ENCODE measurements at regions of chr15 and their contacts with region 1.

Region 1: GRCh38 chr15:77543159-77543882 is 89.4 kb downstream of the LINGO1 start:
- DNase-seq: peak; percentile 87 to 95 (median 94)
- H3K4me3 ChIP-seq: peak overlapping the region; percentile 38
- H3K27ac ChIP-seq: peak overlapping the region; percentile 33 to 64
- H3K4me1 ChIP-seq: peaks cover 5% of the 10 kb centered on the region
- H3K27me3 ChIP-seq: no peaks in the 10 kb centered on the region
- CTCF ChIP-seq: peak; percentile 97 to 98 (median 97)
- EP300 ChIP-seq: no peak
- POLR2A ChIP-seq: peak; percentile 13

Region 2: DNA sequence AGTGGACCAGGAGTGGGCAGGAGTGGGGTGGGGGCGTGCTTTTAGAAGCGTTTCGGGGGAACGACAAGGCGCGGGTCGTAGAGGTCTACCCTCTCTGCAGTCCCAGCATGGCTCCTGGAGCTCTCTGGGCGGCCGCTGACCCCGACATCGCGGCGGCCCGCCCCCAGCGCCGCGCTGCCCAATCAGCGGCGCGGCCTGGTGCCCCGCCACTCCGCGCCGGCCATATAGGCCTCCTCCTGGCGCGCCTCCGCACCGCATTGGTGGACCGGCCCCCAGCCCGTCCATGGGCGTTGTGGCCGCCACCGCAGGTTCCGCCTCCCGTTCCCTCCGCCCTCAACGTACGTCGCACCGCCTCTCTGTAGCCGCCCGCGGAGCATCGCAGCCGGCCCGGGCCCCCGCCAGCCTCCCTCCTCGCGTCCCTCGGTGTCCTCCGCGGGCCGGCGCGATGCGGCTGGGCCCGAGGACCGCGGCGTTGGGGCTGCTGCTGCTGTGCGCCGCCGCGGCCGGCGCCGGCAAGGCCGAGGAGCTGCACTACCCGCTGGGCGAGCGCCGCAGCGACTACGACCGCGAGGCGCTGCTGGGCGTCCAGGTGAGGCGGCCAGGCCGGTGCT is 611.8 kb before region 1 on chr15 and contains the start of gene RCN2:
- intact Hi-C with region 1: loop called in 1 of 4 experiments (anchors 10 kb)
- DNase-seq: peak; percentile 93 to 97 (median 94)
- H3K4me3 ChIP-seq: peak within 1 kb of the TSS; percentile 74
- H3K27ac ChIP-seq: peak within 1 kb of the TSS; percentile 60 to 90
- H3K4me1 ChIP-seq: no peaks in the 10 kb centered on the region
- H3K27me3 ChIP-seq: no peaks in the 10 kb centered on the region
- CTCF ChIP-seq: peak in 1 of 3 donors; percentile 31
- EP300 ChIP-seq: no peak
- POLR2A ChIP-seq: peak; percentile 69
- total RNA-seq, gene RCN2: 31.7 to 58.2 (median 38.3) TPM

Region 3: GRCh38 chr15:77024271-77025082 is 518.8 kb before region 1 on chr15:
- intact Hi-C with region 1: loop called in 2 of 4 experiments (anchors 5 to 10 kb)
- DNase-seq: peak; percentile 61 to 83 (median 77)
- H3K4me3 ChIP-seq: no peak overlapping the region
- H3K27ac ChIP-seq: no peak overlapping the region
- H3K4me1 ChIP-seq: peaks cover 4% of the 10 kb centered on the region
- H3K27me3 ChIP-seq: no peaks in the 10 kb centered on the region
- CTCF ChIP-seq: peak; percentile 79 to 94 (median 84)
- EP300 ChIP-seq: no peak
- POLR2A ChIP-seq: no peak

Region 4: GRCh38 chr15:77107531-77108355 is 435.6 kb before region 1 on chr15:
- intact Hi-C with region 1: loop called in 2 of 4 experiments (anchors 5 kb)
- DNase-seq: peak; percentile 52 to 69 (median 62)
- H3K4me3 ChIP-seq: no peak overlapping the region
- H3K27ac ChIP-seq: no peak overlapping the region
- H3K4me1 ChIP-seq: peaks cover 6% of the 10 kb centered on the region
- H3K27me3 ChIP-seq: no peaks in the 10 kb centered on the region
- CTCF ChIP-seq: peak; percentile 34 to 74 (median 36)
- EP300 ChIP-seq: no peak
- POLR2A ChIP-seq: no peak

Region 5: GRCh38 chr15:77112838-77113504 is 430.4 kb before region 1 on chr15:
- intact Hi-C with region 1: loop called in 3 of 4 experiments (anchors 2 to 5 kb)
- DNase-seq: no peak
- H3K4me3 ChIP-seq: no peak overlapping the region
- H3K27ac ChIP-seq: no peak overlapping the region
- H3K4me1 ChIP-seq: no peaks in the 10 kb centered on the region
- H3K27me3 ChIP-seq: no peaks in the 10 kb centered on the region
- CTCF ChIP-seq: no peak
- EP300 ChIP-seq: no peak
- POLR2A ChIP-seq: no peak

Region 6: DNA sequence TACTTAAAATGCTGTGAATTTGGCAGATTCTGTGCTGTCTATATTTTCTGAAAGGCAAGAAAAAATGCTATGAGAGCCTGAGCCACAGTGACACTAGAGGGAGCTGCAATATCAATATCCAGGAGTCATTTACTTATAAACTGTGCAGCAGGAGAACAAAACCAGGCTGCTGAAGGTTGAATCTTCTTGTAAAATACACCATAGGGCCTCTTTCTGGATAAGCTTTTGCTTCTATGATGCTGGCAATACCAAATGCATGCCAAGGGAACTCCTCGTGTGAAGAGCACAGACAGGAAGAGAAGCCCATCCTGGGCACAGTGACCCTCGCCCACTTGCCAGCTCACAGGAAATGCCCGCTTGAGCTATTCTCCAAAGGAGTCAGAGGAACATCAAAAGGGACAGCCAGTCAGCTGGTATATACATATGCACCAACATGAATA is 424.4 kb before region 1 on chr15:
- intact Hi-C with region 1: loop called in 3 of 4 experiments (anchors 2 to 5 kb)
- DNase-seq: peak in 2 of 5 donors; percentile 20 to 57
- H3K4me3 ChIP-seq: no peak overlapping the region
- H3K27ac ChIP-seq: no peak overlapping the region
- H3K4me1 ChIP-seq: no peaks in the 10 kb centered on the region
- H3K27me3 ChIP-seq: no peaks in the 10 kb centered on the region
- CTCF ChIP-seq: peak; percentile 52 to 71 (median 53)
- EP300 ChIP-seq: no peak
- POLR2A ChIP-seq: no peak

Region 7: GRCh38 chr15:77457905-77458265 is 85.4 kb before region 1 on chr15:
- intact Hi-C with region 1: no loop called
- DNase-seq: no peak
- H3K4me3 ChIP-seq: no peak overlapping the region
- H3K27ac ChIP-seq: no peak overlapping the region
- H3K4me1 ChIP-seq: peaks cover 16% of the 10 kb centered on the region
- H3K27me3 ChIP-seq: no peaks in the 10 kb centered on the region
- CTCF ChIP-seq: no peak
- EP300 ChIP-seq: no peak
- POLR2A ChIP-seq: no peak

Region 8: DNA sequence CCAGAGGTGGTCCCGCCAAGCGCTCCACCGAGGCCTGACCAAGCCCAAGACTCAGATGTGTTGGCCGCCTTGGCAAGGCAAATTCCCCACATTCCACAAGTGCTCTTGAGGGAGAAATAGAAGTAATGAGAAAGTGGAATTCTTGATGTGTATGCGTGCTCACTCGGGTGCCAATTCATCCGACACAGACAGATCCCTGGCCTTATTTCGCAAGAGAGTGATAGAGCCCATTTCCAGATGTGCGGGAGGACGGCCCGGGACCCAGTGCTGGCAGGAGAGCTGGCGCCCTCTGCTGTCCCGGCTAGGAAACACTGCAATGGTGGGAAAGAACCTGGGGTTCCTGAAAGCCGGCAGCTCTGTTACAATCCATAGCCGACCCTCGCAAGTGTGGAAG is 46.6 kb before region 1 on chr15:
- intact Hi-C with region 1: loop called in 1 of 4 experiments (anchors 5 kb)
- DNase-seq: peak; percentile 88 to 91 (median 89)
- H3K4me3 ChIP-seq: no peak overlapping the region
- H3K27ac ChIP-seq: peak overlapping the region in 1 of 2 donors; percentile 77
- H3K4me1 ChIP-seq: peaks cover 11% of the 10 kb centered on the region
- H3K27me3 ChIP-seq: no peaks in the 10 kb centered on the region
- CTCF ChIP-seq: peak; percentile 87 to 94 (median 90)
- EP300 ChIP-seq: no peak
- POLR2A ChIP-seq: no peak